Psoas muscle (tissue), 8 donors: ENCODE measurements at regions of chr3 and their contacts with region 1.

Region 1: GRCh38 chr3:69370156-69370883 is 15.6 kb downstream of the FRMD4B start:
- DNase-seq: peak; percentile 69 to 76
- ATAC-seq: peak; percentile 46 to 75 (median 61)
- H3K4me3 ChIP-seq: no peak overlapping the region
- H3K27ac ChIP-seq: no peak overlapping the region
- H3K4me1 ChIP-seq: peaks cover 3% of the 10 kb centered on the region
- H3K27me3 ChIP-seq: no peaks in the 10 kb centered on the region
- CTCF ChIP-seq: no peak

Region 2: DNA sequence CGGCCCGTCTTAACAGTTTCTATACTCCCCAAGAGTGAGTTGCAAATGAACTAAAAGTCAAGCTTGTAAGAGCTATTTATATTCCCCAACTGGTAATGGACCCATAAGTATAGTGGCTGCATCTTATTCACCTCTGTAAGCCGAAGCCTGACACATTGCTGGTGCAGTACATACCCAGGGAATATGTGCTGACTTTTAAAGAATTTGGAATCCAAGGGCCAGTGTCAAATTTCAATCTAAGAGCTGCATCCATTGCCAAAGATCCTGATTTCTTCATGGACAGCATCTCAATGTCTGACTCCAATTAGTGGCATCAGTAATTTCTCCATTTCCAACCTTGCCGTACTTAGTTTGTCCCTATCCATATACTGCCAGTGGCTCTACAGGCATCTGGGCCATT is 26.4 kb before region 1 on chr3:
- intact Hi-C with region 1: loop called in 1 of 2 experiments (anchors 1 kb)
- DNase-seq: no peak
- ATAC-seq: no peak
- H3K4me3 ChIP-seq: no peak overlapping the region
- H3K27ac ChIP-seq: no peak overlapping the region
- H3K4me1 ChIP-seq: no peaks in the 10 kb centered on the region
- H3K27me3 ChIP-seq: no peaks in the 10 kb centered on the region
- CTCF ChIP-seq: no peak